BJ (cell line): ENCODE measurements at regions of chr3 and their contacts with region 1.

Region 1: DNA sequence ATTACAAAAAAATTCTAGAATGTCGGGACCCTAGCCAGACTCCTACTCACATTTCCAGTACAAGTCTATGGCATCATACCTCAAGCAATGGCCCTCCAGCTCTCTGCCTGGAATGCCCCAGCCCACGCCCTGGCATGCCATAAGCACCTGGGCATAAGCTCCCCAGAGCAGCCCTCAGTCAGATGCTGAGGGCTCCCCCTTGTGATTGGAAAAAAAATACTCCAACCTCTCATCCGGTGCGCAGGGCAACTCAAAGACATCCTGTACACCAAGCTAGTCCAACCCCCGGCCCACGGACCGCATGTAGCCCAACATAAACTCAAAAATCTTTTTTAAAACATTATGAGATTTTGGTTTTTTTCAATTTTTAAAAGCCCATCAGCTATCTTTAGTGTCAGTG is 115.4 kb downstream of the NEK10 start:
- DNase-seq: no peak
- H3K4me3 ChIP-seq: no peak overlapping the region
- H3K27me3 ChIP-seq: no peaks in the 10 kb centered on the region
- CTCF ChIP-seq: peak; percentile 66

Region 2: DNA sequence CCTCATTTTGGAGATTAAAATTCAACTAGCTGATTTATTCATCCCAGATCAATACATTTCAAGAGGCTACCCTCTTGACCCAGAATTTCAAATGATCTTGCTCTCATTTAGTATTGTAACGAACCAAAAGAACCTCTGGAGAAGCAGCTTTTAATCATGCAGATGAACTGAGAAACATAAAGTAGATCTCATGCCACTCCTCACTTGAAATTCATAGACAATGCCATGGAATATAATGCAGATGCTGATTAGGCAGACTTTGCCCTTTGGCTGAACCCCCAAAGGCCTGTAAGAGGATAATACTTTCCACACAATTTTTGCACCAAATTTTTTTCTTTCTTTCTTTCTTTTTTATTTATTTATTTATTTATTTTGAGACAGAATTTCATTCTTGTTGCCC is 243.0 kb before region 1 on chr3:
- CTCF ChIA-PET with region 1: no interaction called
- POLR2A ChIA-PET with region 1: no interaction called
- DNase-seq: no peak
- H3K4me3 ChIP-seq: no peak overlapping the region
- H3K27me3 ChIP-seq: no peaks in the 10 kb centered on the region
- CTCF ChIP-seq: no peak

Region 3: GRCh38 chr3:27134165-27134796 is 119.5 kb before region 1 on chr3:
- CTCF ChIA-PET with region 1: interaction called, 195 read pairs
- POLR2A ChIA-PET with region 1: no interaction called
- DNase-seq: peak; percentile 11
- H3K4me3 ChIP-seq: no peak overlapping the region
- H3K27me3 ChIP-seq: no peaks in the 10 kb centered on the region
- CTCF ChIP-seq: peak; percentile 92

Region 4: GRCh38 chr3:27141668-27142067 is 112.2 kb before region 1 on chr3:
- CTCF ChIA-PET with region 1: interaction called, 195 read pairs
- POLR2A ChIA-PET with region 1: no interaction called
- DNase-seq: no peak
- H3K4me3 ChIP-seq: no peak overlapping the region
- H3K27me3 ChIP-seq: no peaks in the 10 kb centered on the region
- CTCF ChIP-seq: no peak

Region 5: DNA sequence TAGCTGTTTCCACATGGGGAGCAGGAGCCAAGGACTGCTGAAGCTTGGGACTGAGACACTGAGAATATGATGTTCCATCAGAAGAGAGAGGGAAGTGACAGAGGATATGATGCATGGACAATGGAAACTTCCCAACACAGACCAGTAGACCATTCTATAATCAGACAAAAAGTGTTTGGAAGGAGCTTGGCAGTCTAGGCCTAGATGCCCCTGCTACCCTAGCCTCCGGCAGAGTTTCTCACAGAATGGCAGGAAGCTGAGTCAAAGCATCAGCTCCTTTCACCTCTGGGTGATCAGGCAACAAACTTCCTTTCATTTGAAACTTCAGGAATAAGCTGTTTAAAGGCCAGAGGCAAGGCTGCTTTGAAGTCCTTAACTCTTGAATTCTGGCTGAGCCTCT is 106.6 kb before region 1 on chr3:
- CTCF ChIA-PET with region 1: interaction called, 17 read pairs
- POLR2A ChIA-PET with region 1: no interaction called
- DNase-seq: no peak
- H3K4me3 ChIP-seq: no peak overlapping the region
- H3K27me3 ChIP-seq: no peaks in the 10 kb centered on the region
- CTCF ChIP-seq: no peak

Region 6: GRCh38 chr3:27200721-27201489 is 52.9 kb before region 1 on chr3:
- CTCF ChIA-PET with region 1: interaction called, 4 read pairs
- POLR2A ChIA-PET with region 1: interaction called, 10 read pairs
- DNase-seq: no peak
- H3K4me3 ChIP-seq: no peak overlapping the region
- H3K27me3 ChIP-seq: no peaks in the 10 kb centered on the region
- CTCF ChIP-seq: no peak

Region 7: DNA sequence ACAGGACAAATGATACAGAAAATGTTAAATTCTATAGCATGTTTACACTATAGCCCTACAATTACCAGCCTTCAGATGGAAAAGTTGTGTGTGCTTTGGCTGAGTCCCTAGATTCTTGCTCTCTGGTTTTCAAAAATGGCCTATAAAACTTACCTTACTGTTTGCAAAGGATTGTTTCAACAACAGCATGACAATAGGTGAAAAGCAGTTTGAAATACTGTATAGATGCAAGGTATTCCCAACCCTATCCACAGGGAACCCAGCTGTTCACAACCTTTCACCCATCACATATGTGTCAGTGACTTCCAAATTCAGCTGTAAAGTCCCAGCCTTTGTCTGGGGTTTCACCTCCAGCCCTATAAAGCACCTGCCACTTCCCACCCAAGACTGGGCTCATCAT is 18.1 kb after region 1 on chr3:
- CTCF ChIA-PET with region 1: interaction called, 10 read pairs
- POLR2A ChIA-PET with region 1: no interaction called
- DNase-seq: no peak
- H3K4me3 ChIP-seq: no peak overlapping the region
- H3K27me3 ChIP-seq: no peaks in the 10 kb centered on the region
- CTCF ChIP-seq: no peak